Dendritic cell treated with granulocyte-macrophage colony-stimulating factor and Interleukin-4, amounts not matched to agents 40 ng/mL and 50 ng/mL, for 4 days (primary cell): ENCODE measurements at regions of chr3 and their contacts with region 1.

Region 1: DNA sequence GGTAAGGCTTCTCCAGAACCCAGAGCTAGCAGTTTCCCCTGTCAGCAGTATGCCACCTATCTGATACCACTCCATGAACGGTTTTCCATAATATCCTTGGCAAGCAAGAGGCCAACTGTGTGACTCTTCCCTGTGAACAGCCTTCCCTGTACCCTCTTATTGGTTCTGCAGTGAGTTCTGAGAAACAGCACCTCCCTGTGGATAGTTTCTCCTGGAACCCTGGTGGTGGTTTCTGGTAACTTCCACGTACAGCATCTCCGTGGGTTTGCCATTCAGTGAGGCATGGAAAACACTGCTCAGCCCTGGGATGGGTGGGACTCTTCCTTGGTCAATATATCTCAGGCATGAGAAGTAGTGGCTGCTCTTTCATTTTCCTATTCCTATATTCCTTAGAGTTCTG is 19.4 kb upstream of the SERPINI2 start:
- H3K4me3 Mint-ChIP-seq: no peak overlapping the region
- H3K27ac Mint-ChIP-seq: no peak overlapping the region
- H3K4me1 Mint-ChIP-seq: peaks cover 16% of the 10 kb centered on the region
- H3K27me3 Mint-ChIP-seq: no peaks in the 10 kb centered on the region

Region 2: GRCh38 chr3:167406875-167407492 is 86.3 kb before region 1 on chr3:
- intact Hi-C with region 1: loop called (anchors 10 kb)
- H3K4me3 Mint-ChIP-seq: no peak overlapping the region
- H3K27ac Mint-ChIP-seq: no peak overlapping the region
- H3K4me1 Mint-ChIP-seq: no peaks in the 10 kb centered on the region
- H3K27me3 Mint-ChIP-seq: no peaks in the 10 kb centered on the region

Region 3: DNA sequence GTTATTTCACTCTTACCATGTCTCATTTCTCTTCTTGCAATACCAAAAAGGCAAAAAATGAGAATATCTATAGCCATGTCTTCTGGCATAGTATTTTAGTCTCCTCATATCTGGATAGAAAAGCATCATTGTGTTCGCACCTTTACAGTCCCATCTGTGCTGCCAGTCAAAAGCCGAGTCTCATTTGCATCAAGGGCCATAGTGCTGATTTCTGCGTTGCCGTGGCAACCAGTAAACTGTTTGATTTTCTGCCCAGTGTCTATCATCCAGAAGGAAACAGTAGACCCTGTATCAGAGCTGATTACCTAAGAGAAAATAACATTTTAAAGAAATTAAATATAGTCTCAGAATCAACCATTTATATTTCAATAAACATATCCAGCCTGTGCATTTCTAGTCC is 66.7 kb after region 1 on chr3:
- intact Hi-C with region 1: no loop called
- H3K4me3 Mint-ChIP-seq: no peak overlapping the region
- H3K27ac Mint-ChIP-seq: no peak overlapping the region
- H3K4me1 Mint-ChIP-seq: no peaks in the 10 kb centered on the region
- H3K27me3 Mint-ChIP-seq: no peaks in the 10 kb centered on the region